SK-N-SH (cell line): ENCODE measurements at regions of chr12 and their contacts with region 1.

Region 1: DNA sequence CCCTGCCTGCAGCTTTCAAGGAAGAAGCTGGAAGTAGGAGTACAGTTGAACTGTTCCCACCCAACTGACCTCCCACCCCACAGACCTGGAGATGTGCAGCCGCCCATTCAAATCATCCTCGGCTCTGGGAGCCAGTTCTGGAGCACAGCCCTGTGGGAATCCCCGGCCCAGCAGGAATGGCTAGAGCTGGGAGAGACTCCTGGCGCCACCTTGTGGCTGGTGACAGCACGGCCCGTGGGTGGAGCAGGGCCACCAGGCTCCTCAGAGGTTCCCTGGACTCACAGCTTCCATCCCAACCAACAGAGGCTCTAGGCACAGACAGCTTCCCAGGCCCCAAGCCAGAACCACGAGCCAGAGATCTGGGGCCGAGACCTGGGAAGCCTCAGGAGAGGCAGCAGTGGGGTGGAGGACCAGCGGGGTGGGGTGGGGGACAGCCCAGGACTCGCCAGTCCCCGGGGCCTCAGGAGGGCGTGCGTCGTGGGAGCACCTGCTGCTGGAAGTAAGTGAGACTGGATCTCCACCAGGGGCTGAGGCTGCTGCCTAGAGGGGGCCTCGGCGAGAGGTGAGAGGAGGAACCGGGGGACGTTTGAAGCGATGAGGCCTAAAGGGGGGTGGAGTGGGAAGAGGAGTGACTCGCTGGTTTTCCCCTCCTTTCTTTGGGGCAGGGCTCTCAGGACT is 43.4 kb downstream of the RNF34 start:
- DNase-seq: peak; percentile 97
- H3K4me3 ChIP-seq: no peak overlapping the region; a peak in 1 of 4 replicates
- H3K27ac ChIP-seq: no peak overlapping the region
- H3K4me1 ChIP-seq: peaks cover 0 to 2% of the 10 kb centered on the region in 2 experiments; a peak in 1 of 4 replicates
- H3K27me3 ChIP-seq: no peaks in the 10 kb centered on the region
- CTCF ChIP-seq: peak; percentile 88
- EP300 ChIP-seq: no peak
- RAD21 ChIP-seq: peak; percentile 92

Region 2: GRCh38 chr12:121345151-121345815 is 98.0 kb before region 1 on chr12:
- CTCF ChIA-PET with region 1: interaction called, 27 read pairs
- POLR2A ChIA-PET with region 1: no interaction called
- DNase-seq: no peak
- H3K4me3 ChIP-seq: no peak overlapping the region
- H3K27ac ChIP-seq: no peak overlapping the region
- H3K4me1 ChIP-seq: no peaks in the 10 kb centered on the region
- H3K27me3 ChIP-seq: no peaks in the 10 kb centered on the region
- CTCF ChIP-seq: no peak
- EP300 ChIP-seq: no peak
- RAD21 ChIP-seq: no peak

Region 3: DNA sequence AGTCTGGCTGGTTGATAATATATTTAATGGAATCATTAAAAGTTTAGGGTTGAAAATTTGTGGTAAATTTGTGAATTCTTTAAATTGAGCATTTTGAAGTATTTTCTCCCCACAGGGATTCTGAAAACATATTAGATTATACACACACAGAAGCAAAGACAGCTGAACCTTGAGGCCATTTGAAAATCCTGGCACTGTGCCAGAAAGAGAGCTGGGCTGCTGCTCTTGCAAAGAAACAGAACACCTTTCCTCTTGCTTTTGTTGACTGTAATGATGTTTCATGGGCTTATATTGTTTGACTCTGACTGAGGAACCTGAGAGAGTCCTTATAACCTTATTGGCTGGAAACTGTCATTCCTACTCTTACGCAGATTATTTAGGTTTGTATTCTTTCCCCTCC is 38.6 kb before region 1 on chr12:
- CTCF ChIA-PET with region 1: interaction called, 15 read pairs
- POLR2A ChIA-PET with region 1: no interaction called
- DNase-seq: peak; percentile 57
- H3K4me3 ChIP-seq: no peak overlapping the region
- H3K27ac ChIP-seq: peak overlapping the region in 1 of 2 experiments; percentile 80; a peak in 2 of 4 replicates
- H3K4me1 ChIP-seq: peaks cover 6 to 8% of the 10 kb centered on the region in 2 experiments; a peak in 3 of 4 replicates
- H3K27me3 ChIP-seq: no peaks in the 10 kb centered on the region
- CTCF ChIP-seq: no peak
- EP300 ChIP-seq: peak in 1 of 2 experiments; percentile 58; a peak in 1 of 4 replicates
- RAD21 ChIP-seq: no peak; the same call in 1 of the 2 replicates

Region 4: DNA sequence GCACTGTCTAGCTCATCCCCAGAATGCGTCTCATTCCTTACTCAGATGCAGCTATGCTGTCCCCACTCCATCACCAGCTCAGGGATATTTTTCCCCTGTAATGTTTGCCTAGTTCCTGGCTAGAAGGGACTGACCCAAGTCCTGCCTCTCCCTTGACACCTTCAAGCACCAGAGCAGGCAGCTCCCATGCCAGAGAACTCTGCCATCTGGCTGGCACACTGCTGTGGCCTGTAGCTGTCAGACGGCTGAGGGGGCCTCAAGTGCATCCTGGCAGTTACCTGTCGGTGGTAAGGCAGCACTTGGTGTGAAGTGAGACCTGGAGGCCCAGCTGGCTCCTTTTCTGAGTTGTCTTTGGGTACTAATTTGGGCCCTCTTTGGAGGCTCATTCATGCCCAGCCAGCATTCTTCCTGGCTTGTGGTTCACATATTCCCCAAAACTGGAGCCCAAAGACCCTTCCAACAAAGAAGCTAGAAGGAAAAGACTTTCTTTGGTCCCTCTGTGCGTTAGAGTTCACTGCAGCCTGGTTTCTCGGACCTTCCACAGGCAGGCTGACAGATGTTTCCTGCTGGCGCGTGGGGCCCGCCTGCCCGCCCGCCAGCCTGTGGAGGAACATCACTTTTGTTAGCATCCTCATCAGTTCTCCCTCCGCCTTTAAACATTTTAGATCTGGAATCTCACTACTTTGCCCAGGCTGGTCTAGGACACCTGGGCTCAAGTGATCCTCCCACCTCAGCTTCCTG is 10.4 kb before region 1 on chr12:
- CTCF ChIA-PET with region 1: interaction called, 33 read pairs
- POLR2A ChIA-PET with region 1: no interaction called
- DNase-seq: no peak
- H3K4me3 ChIP-seq: no peak overlapping the region
- H3K27ac ChIP-seq: no peak overlapping the region
- H3K4me1 ChIP-seq: no peaks in the 10 kb centered on the region
- H3K27me3 ChIP-seq: no peaks in the 10 kb centered on the region
- CTCF ChIP-seq: no peak
- EP300 ChIP-seq: no peak
- RAD21 ChIP-seq: no peak

Region 5: DNA sequence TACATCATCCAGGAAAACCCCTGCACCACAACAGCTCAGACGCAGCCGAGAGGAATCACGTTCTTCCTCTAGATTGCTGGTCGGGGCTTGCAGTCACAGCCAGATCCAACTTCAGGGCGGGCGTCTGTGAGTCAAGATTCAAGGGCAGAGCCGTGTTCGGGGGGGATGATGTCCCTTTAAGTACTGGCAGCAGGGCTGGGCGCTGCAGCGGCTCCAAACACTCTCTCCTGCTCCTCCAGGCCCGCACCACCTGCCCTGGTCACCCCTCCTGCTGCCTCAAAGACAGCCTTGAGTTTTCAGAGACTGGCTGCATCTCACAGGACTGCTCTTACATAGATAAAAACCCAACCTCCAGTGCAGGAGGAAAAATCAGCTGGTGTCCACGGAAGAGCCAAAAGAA is 69.2 kb after region 1 on chr12:
- CTCF ChIA-PET with region 1: no interaction called
- POLR2A ChIA-PET with region 1: no interaction called
- DNase-seq: no peak
- H3K4me3 ChIP-seq: no peak overlapping the region
- H3K27ac ChIP-seq: no peak overlapping the region
- H3K4me1 ChIP-seq: peaks cover 0 to 7% of the 10 kb centered on the region in 2 experiments; a peak in 1 of 4 replicates
- H3K27me3 ChIP-seq: no peaks in the 10 kb centered on the region
- CTCF ChIP-seq: no peak
- EP300 ChIP-seq: no peak
- RAD21 ChIP-seq: no peak